ENCODE measurements at regions of chr14 and their contacts with region 1.

Region 1: DNA sequence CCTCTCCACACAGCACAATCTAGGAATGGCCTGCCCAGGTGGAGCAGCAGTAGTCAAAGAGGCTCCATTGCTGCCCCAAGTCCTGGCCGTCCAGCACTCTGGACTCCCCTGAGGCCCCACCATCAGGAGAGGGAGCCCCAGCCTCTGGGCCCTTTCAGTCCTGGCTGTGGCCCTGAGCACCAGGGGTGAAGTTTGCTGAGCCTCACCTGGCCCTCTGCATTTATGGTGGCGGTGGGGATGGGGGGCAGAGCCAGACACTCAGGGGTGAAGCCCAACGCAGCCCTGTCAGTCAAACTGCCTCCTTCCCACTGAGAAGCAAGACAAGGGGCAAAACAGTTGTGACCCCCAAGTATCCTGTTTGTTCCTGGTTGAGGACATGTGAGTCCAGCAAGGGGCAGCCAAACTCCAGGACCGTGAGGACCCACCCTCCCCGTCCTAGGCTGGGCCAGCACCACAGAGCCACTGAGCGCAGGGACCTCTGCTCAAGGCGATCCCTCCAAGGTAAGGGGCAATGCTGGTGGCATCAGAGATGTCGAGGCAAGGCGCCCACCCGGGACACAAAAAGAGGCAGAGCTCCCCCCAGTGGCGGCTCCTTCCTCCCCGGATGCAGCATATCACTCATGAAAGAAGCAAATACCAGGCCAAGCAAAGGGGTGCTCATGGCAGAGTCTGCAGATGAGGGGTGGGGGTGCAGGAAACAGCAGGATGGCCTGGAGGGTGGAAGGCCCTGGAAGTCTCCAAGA is 4.8 kb upstream of the AMN start:
- DNase-seq: peak; percentile 86
- CTCF ChIP-seq: peak; percentile 80

Region 2: GRCh38 chr14:102694530-102695166 is 223.0 kb before region 1 on chr14:
- in situ Hi-C with region 1: loop called (anchors 10 kb)
- DNase-seq: peak; percentile 57
- CTCF ChIP-seq: peak; percentile 61

Region 3: GRCh38 chr14:102774391-102775153 is 143.1 kb before region 1 on chr14:
- in situ Hi-C with region 1: loop called (anchors 10 kb)
- DNase-seq: peak; percentile 89
- CTCF ChIP-seq: peak; percentile 75

Region 4: DNA sequence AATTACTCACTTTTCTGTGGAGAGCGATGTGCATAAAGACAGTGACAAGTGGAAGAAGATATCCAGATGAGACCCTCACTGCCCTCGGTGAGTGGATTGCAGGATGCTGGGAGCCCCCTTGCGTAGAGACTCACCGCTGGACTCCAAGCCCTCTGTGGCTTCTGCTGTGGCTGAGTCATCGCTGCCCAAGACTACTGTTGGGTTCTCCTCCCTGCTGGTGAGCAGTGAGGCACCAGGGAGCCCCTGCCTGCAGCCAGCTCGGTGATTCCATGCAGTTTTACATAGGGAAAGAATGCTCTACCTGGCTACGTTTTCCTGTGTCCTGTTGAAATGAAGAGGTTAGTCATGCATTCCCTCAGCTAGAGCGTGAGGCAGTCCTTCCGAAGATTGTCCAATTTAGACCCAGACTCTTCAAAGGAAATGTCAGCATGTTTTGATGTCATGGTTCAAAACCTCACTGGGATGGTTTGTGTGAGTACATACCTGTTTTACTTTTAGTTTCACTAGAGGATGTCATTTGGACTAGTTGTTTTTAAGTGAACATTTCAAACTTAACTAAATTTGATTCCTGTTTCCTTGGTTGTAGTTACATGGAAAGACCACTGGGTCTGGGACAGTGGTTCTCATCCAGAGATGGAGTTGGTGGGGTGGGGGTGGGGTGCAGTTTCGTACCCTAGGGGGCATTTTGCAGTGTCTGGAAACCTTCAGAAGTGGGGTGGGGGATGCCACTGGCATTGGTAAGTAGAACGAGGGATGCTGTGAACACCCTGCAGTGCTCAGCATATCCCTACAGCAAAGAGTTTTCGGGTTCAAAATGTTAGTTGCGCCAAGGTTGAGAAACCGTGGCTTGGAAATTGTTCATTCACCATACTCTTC is 112.0 kb before region 1 on chr14:
- in situ Hi-C with region 1: no loop called
- DNase-seq: peak; percentile 48
- CTCF ChIP-seq: no peak

Region 5: GRCh38 chr14:103594265-103594664 is 676.6 kb after region 1 on chr14:
- in situ Hi-C with region 1: no loop called
- DNase-seq: no peak
- CTCF ChIP-seq: no peak